OCI-LY7 (cell line): ENCODE measurements at regions of chr10 and their contacts with region 1.

Region 1: GRCh38 chr10:114821293-114821914 is at the start of gene FHIP2A:
- DNase-seq: peak; percentile 88
- H3K4me3 ChIP-seq: peak within 1 kb of the TSS; percentile 80
- H3K27ac ChIP-seq: peak within 1 kb of the TSS; percentile 72
- H3K4me1 ChIP-seq: peaks cover 13% of the 10 kb centered on the region
- CTCF ChIP-seq: peak; percentile 51
- total RNA-seq, gene FHIP2A: 4.2 and 10.1 TPM in 2 replicates

Region 2: GRCh38 chr10:114173921-114174694 is 647.3 kb before region 1 on chr10 and contains the start of gene CCDC186:
- CTCF ChIA-PET with region 1: no interaction called
- POLR2A ChIA-PET with region 1: no interaction called
- intact Hi-C with region 1: loop called (anchors 10 kb)
- DNase-seq: peak; percentile 96
- H3K4me3 ChIP-seq: peak within 1 kb of the TSS; percentile 73
- H3K27ac ChIP-seq: no peak within 1 kb of the TSS
- H3K4me1 ChIP-seq: peaks cover 16% of the 10 kb centered on the region
- CTCF ChIP-seq: no peak
- total RNA-seq, gene CCDC186: 5.3 and 8.1 TPM in 2 replicates

Region 3: GRCh38 chr10:114499630-114500190 is 321.7 kb before region 1 on chr10:
- CTCF ChIA-PET with region 1: no interaction called
- POLR2A ChIA-PET with region 1: no interaction called
- intact Hi-C with region 1: loop called (anchors 10 kb)
- DNase-seq: peak; percentile 75
- H3K4me3 ChIP-seq: peak overlapping the region; percentile 49
- H3K27ac ChIP-seq: peak overlapping the region; percentile 97
- H3K4me1 ChIP-seq: peaks cover 92% of the 10 kb centered on the region
- CTCF ChIP-seq: no peak

Region 4: DNA sequence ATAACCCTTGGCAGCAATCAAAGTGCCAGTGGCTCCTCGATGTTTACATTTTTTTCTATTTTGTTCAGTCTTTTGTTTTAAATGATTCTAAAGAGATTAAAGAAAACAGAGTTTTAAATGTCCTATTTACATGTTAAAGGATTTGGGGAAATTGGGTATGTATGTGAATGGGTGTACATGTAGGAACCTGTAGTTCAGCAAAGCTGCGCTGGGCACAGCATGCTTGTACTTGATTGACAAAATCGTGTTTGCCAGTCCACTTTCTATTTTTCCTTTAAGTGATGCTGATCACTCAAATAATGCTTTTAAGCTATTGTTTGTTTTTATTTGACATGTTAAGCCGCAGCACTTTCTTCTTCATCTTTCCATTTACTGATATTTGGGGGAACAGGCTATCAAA is 41.1 kb after region 1 on chr10:
- CTCF ChIA-PET with region 1: no interaction called
- POLR2A ChIA-PET with region 1: no interaction called
- intact Hi-C with region 1: no loop called
- DNase-seq: no peak
- H3K4me3 ChIP-seq: no peak overlapping the region
- H3K27ac ChIP-seq: no peak overlapping the region
- H3K4me1 ChIP-seq: no peaks in the 10 kb centered on the region
- CTCF ChIP-seq: no peak

Region 5: DNA sequence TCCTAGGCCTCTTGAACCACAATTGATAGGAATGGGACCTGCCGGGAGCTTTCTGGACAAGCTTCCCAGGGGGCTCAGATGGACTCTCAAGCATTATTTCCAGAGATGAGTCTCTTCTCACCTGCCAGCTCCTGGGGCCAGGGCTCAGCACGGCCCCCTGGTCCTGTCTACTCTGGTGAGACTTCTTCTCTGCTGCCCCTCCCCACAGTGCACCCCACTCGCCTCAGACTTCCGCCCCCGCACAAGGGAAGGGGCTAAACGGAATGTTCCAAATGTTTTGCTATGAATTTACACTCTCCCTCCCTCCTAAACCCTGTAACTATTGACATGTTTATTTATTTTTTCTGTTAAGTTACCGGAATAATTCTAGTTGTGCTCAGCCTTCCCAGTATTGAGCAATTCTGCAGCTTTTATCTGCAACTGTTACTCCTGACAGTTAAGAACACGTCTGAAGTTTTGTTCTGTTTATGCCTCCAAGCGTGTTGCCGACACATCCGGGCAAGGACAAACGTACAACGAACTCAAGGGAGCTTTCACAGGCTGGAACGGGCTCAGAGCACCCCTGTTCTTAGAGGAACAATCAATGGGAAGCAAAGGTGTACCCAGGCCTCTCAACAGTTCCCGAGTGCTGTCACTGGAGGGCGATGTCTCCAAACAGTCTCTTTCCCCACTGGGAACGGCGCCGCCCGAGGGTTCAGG is 55.3 kb after region 1 on chr10:
- CTCF ChIA-PET with region 1: interaction called, 6 read pairs
- POLR2A ChIA-PET with region 1: no interaction called
- intact Hi-C with region 1: loop called (anchors 5 kb)
- DNase-seq: peak; percentile 61
- H3K4me3 ChIP-seq: no peak overlapping the region
- H3K27ac ChIP-seq: no peak overlapping the region
- H3K4me1 ChIP-seq: no peaks in the 10 kb centered on the region
- CTCF ChIP-seq: peak; percentile 77

Region 6: GRCh38 chr10:114937962-114938855 is 116.8 kb after region 1 on chr10 and contains the start of gene TRUB1:
- CTCF ChIA-PET with region 1: interaction called, 3 read pairs
- POLR2A ChIA-PET with region 1: interaction called, 3 read pairs
- intact Hi-C with region 1: loop called (anchors 2 kb)
- DNase-seq: peak; percentile 94
- H3K4me3 ChIP-seq: peak within 1 kb of the TSS; percentile 99
- H3K27ac ChIP-seq: peak within 1 kb of the TSS; percentile 46
- H3K4me1 ChIP-seq: peaks cover 11% of the 10 kb centered on the region
- CTCF ChIP-seq: no peak
- total RNA-seq, gene TRUB1: 18.7 and 30.8 TPM in 2 replicates